ENCODE measurements at regions of chr9 and their contacts with region 1.

Region 1: GRCh38 chr9:132030626-132031325 is 48.9 kb downstream of the MED27 start:
- DNase-seq: no peak
- H3K4me3 ChIP-seq: no peak overlapping the region
- H3K27ac ChIP-seq: no peak overlapping the region
- H3K4me1 ChIP-seq: peaks cover 34% of the 10 kb centered on the region
- H3K27me3 ChIP-seq: no peaks in the 10 kb centered on the region
- CTCF ChIP-seq: no peak

Region 2: GRCh38 chr9:132156262-132156661 is 125.5 kb after region 1 on chr9:
- CTCF ChIA-PET with region 1: interaction called, 14 read pairs
- POLR2A ChIA-PET with region 1: no interaction called
- intact Hi-C with region 1: no loop called
- DNase-seq: no peak
- H3K4me3 ChIP-seq: no peak overlapping the region
- H3K27ac ChIP-seq: no peak overlapping the region
- H3K4me1 ChIP-seq: no peaks in the 10 kb centered on the region
- H3K27me3 ChIP-seq: peaks cover 98% of the 10 kb centered on the region
- CTCF ChIP-seq: no peak

Measured in PC-9 (cell line).